ENCODE measurements at regions of chr5 and their contacts with region 1.

Region 1: GRCh38 chr5:59188419-59189225 is 605.7 kb downstream of the RAB3C start:
- DNase-seq: peak; percentile 80
- ATAC-seq: peak; percentile 86 to 91
- H3K4me3 ChIP-seq: peak overlapping the region; percentile 31
- H3K27ac ChIP-seq: no peak overlapping the region
- H3K4me1 ChIP-seq: peaks cover 10% of the 10 kb centered on the region
- H3K27me3 ChIP-seq: no peaks in the 10 kb centered on the region
- CTCF ChIP-seq: peak; percentile 82

Region 2: DNA sequence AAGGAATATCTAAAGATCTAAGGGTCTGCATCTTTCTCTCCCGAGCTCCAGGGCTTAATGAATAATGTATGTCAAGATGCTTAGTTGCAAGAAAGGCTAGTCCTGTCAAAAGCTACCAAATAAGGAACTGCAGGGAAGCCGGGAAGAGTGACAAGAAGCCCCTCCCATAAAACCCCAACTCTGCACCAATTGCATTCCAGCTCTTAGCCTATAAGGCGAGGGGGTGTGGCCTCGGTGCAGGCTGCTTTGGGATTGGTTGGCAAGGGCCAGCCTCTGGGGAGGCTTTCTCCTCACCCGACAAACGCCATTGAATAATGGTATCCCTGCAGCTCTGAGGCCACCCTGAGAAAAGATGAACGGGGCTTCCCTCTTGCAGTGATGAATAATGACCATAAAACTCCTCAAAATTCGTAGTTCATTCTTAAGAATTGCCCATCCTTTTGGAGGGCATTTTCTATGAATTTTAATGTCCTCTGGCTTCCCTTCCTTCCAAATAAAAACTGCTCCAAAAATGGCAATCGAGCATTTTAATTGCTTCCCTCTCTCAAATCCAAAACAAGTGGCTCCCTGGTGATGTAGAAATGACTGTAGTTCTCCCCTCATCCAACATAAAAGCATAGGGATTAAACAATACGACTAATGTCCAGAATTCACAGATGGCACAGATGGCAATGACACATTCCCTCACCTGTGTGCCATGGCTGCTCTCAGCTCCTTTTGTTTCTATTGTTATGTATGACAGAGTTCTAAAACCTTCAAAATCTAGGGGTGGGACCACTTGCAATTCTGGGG is 188.6 kb before region 1 on chr5:
- intact Hi-C with region 1: no loop called
- DNase-seq: no peak
- ATAC-seq: no peak
- H3K4me3 ChIP-seq: no peak overlapping the region
- H3K27ac ChIP-seq: no peak overlapping the region
- H3K4me1 ChIP-seq: peaks cover 19% of the 10 kb centered on the region
- H3K27me3 ChIP-seq: no peaks in the 10 kb centered on the region
- CTCF ChIP-seq: no peak

Region 3: GRCh38 chr5:59367791-59368394 is 179.3 kb after region 1 on chr5:
- intact Hi-C with region 1: loop called (anchors 5 kb)
- DNase-seq: peak; percentile 55
- ATAC-seq: peak; percentile 79 to 91
- H3K4me3 ChIP-seq: no peak overlapping the region
- H3K27ac ChIP-seq: no peak overlapping the region
- H3K4me1 ChIP-seq: peaks cover 6% of the 10 kb centered on the region
- H3K27me3 ChIP-seq: no peaks in the 10 kb centered on the region
- CTCF ChIP-seq: peak; percentile 74

Region 4: DNA sequence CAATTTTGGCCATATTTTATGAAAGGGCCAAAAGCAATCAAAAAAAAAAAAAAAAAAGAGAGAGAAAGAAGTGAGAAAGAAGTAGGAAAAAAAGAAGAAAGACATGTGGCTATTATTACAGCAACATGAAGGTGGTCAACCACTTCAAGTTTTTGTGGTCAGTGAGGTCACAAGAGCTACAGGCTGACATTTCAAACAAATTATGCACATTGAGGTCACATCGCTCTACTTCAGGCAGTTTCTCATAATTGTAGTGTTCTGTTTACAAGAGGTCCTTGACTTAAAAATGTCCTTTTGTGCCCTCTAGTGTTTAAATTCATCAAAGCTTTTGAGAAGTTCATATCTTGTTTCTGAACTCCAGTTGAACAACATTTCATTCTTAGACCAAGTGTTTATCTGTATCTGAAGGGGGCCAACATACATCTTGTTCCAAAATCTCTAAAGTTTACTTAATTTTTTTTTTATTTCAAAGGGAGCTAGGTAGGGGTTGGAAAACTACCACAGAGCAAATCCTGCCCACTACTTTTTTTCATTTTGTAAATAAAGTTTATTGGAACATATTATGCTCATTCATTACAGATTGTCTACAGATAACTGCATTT is 191.8 kb after region 1 on chr5:
- intact Hi-C with region 1: loop called (anchors 5 kb)
- DNase-seq: no peak
- ATAC-seq: peak; percentile 90 to 93
- H3K4me3 ChIP-seq: no peak overlapping the region
- H3K27ac ChIP-seq: peak overlapping the region; percentile 39
- H3K4me1 ChIP-seq: peaks cover 8% of the 10 kb centered on the region
- H3K27me3 ChIP-seq: no peaks in the 10 kb centered on the region
- CTCF ChIP-seq: peak; percentile 47

Measured in lower lobe of right lung (tissue), 2 donors.